ENCODE measurements at regions of chr19 and their contacts with region 1.

Region 1: DNA sequence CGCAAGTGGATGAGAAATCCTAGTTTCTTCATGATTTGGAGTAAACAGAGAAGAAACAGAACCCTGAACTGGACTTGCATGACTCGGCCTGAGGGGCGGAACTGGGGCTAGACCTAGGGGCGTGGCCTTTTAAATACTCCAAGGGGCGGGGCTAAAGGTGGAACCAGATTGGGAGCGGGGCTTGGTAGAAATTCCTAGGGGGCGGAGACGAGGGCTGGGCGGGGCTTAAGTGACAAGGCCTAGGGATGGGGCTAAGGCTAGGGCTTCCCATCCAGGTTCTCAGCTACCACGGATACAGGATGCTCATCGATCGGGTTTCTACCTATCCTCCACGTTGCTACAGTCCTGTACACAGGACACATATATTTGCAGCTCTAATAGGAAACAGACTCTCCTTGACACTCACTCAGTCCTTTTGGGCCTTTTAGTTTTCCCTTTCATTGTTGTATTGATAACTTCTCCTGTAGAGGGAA is 372 bp upstream of the ZNF699 start:
- DNase-seq: peak; percentile 69
- H3K4me3 ChIP-seq: peak overlapping the region; percentile 50 to 92 (median 74)
- H3K27ac ChIP-seq: peak overlapping the region; percentile 93 to 100 (median 96)
- H3K4me1 ChIP-seq: peaks cover 5 to 30% (median 7%) of the 10 kb centered on the region in 3 donors
- H3K27me3 ChIP-seq: no peaks in the 10 kb centered on the region
- CTCF ChIP-seq: no peak
- POLR2A ChIP-seq: no peak

Region 2: GRCh38 chr19:9552536-9553274 is 242.7 kb after region 1 on chr19:
- intact Hi-C with region 1: no loop called
- DNase-seq: no peak
- H3K4me3 ChIP-seq: no peak overlapping the region
- H3K27ac ChIP-seq: no peak overlapping the region
- H3K4me1 ChIP-seq: no peaks in the 10 kb centered on the region
- H3K27me3 ChIP-seq: no peaks in the 10 kb centered on the region
- CTCF ChIP-seq: no peak
- POLR2A ChIP-seq: no peak

Region 3: DNA sequence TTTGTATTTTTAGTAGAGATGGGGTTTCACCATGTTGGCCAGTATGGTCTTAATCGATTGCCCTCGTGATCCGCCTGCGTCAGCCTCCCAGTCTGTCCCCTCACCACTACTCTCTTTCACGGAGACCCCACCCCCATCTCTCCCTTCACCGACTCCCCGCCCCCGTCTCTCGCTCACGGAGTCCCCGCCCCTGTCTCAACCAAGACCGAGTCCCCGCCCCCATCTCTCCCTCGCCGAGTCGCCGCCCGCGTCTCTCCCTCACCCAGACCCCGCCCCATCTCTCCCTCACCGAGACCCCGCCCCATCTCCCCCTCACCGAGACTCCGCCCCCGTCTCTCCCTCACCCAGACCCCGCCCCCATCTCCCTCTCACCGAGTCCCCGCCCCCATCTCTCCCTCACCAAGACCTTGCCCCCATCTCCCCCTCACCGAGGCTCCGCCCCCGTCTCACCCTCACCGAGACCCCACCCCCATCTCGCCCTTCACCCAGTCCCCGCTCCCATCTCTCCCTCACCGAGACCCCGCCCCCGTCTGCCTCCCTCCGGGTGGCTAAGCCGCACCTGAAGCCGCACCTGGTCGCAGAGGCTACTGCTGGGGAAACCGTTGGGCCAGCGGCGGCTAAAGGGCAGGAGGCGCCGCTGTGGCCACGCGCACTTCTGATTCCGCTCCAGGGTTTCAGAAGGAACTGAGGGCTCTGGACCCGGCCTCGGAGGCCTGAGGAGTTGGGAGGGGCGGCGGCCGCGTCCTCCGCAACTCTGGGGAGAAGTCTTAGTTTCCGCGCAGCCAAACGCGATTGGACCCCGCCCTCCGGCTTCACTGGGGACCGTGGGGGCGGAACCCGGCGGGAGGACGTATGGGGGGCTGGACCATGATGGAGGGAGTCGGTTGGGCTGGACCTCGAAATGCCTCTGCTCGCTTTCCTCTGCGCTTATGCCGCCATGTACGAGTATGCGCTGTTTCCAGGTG is 475.6 kb after region 1 on chr19:
- intact Hi-C with region 1: loop called (anchors 10 kb)
- DNase-seq: peak; percentile 97
- H3K4me3 ChIP-seq: peak overlapping the region; percentile 64 to 91 (median 66)
- H3K27ac ChIP-seq: peak overlapping the region; percentile 95 to 100 (median 98)
- H3K4me1 ChIP-seq: peaks cover 6 to 46% (median 17%) of the 10 kb centered on the region in 3 donors
- H3K27me3 ChIP-seq: no peaks in the 10 kb centered on the region
- CTCF ChIP-seq: peak in 1 of 6 experiments; percentile 7
- POLR2A ChIP-seq: peak in 2 of 4 donors; percentile 89 to 92